ENCODE measurements at regions of chr6 and their contacts with region 1.

Region 1: DNA sequence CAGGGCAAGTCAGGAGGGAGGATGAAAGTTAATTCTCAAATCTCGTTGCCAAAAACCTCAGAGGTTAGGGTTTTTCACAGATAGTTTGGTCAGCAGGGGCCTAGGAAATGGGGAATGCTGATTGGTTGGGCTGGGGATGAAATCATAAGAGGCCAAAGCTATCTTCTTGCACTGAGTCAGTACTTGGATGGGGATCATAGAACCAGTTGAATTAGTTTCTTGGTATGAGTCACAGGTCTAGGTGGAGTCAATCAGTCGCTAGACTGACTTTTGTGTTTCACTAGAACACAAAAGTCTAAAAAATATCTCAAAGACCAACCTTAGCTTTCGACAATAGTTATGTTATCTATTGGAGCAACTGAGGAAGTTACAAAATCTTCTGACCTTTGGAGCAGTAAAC is 368.5 kb downstream of the TBC1D32 start:
- DNase-seq: no peak

Region 2: GRCh38 chr6:120303527-120303926 is 662.3 kb before region 1 on chr6:
- intact Hi-C with region 1: no loop called
- DNase-seq: no peak

Region 3: DNA sequence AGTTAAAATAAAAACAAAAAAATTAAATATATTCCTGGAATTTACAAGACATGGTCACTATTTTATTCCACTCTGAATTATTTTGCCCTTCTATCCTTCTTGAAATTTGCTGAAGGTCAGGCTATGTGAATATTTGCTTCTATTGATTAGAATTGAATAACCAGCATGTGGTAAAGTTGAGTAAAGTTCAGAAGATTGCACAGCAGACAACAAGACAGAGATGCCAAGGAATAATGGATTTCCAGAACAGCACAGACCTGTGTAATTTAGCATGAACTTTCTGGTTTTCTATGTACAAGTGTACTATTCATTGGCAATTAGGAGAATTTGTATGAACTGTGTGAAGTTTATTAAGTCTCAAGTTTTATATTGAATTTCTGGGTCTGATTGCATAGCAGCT is 16.0 kb after region 1 on chr6:
- intact Hi-C with region 1: loop called in 1 of 2 experiments (anchors 1 kb)
- DNase-seq: no peak